ENCODE measurements at regions of chr6 and their contacts with region 1.

Region 1: DNA sequence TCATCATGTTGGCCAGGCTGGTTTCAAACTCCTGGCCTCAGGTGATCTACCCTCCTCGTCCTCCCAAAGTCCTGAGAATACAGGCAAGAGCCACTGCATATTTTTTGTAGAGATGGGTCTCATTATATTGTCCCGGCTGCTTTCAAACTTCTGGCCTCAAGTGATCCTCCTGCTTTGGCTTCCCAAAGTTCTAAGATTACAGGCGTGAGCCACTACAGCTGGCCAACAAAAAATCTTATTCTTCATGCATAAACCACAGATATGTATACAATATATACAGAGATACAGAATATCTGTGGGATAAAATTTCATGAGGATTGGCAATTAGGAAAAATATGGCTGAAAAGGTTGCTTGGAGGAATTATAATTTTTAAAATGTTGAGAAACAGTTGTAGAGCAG is 49.9 kb downstream of the SLC35A1 start:
- DNase-seq: no peak
- ATAC-seq: no peak
- H3K4me3 Mint-ChIP-seq: no peak overlapping the region
- H3K27ac Mint-ChIP-seq: no peak overlapping the region
- H3K4me1 Mint-ChIP-seq: no peaks in the 10 kb centered on the region
- H3K27me3 Mint-ChIP-seq: no peaks in the 10 kb centered on the region

Region 2: DNA sequence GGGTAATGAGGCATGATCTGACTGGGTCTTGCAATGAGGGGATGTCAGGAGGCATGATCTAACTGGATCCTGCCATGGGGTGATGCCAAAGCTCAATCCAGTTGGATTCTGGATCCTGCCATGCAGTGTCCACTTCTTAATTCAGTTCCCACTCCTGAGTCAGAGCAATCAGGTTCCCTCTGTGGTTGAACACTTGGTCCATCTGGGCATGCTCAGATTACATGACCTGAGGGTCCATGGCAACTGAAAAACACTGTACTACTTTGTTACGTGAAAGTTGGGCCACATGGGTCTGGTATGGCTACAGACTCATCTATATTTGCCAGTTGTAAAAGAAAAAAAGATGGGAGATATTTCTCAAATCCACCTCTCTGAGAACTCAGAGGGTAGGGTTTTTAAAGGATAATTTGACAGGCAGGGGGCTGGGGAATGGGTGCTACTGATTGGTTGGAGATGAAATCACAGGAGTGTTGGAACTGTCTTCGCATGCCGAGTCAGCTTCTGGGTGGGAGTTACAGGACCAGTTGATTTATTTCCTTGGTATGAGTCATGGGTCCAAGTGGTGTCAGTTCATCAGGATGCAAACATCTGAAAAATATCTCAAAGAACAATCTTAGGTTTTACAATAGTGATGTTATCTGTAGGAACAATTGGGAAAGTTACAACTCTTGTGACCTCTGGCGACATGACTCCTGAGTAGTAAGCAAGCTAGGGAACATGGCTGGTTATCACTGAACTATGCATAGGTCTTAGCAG is 156.4 kb before region 1 on chr6:
- CTCF ChIA-PET with region 1: no interaction called
- POLR2A ChIA-PET with region 1: no interaction called
- intact Hi-C with region 1: no loop called
- DNase-seq: no peak
- ATAC-seq: no peak
- H3K4me3 Mint-ChIP-seq: no peak overlapping the region
- H3K27ac Mint-ChIP-seq: no peak overlapping the region
- H3K4me1 Mint-ChIP-seq: no peaks in the 10 kb centered on the region
- H3K27me3 Mint-ChIP-seq: no peaks in the 10 kb centered on the region

Region 3: GRCh38 chr6:87600576-87600975 is 77.9 kb after region 1 on chr6:
- CTCF ChIA-PET with region 1: no interaction called
- POLR2A ChIA-PET with region 1: interaction called, 13 read pairs
- intact Hi-C with region 1: no loop called
- DNase-seq: no peak
- ATAC-seq: no peak
- H3K4me3 Mint-ChIP-seq: no peak overlapping the region
- H3K27ac Mint-ChIP-seq: peak overlapping the region; percentile 19
- H3K4me1 Mint-ChIP-seq: no peaks in the 10 kb centered on the region
- H3K27me3 Mint-ChIP-seq: no peaks in the 10 kb centered on the region

Measured in activated CD4-positive, alpha-beta T cell treated with anti-CD3 and anti-CD28 coated beads for 36 hours (primary cell).